ENCODE measurements at regions of chr18 and their contacts with region 1.

Region 1: DNA sequence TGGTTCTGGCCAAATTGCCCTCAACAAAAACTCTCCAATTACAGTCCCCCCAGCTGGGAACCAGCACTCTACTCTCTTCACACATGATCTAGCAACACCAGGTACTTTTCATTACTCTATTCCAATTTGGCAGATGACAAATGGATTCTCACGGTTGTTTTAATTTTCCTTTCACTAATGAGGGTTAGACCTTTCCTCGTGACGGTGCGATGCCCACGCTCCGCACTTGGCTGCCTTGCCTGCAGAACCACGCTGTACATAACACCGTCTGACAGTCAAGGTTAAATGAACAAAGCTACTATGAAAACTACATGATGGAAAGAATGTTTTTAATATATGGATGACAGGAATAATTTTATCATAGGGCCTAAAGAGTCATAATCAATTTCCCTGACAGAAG is 141.5 kb downstream of the FBXO15 start:
- DNase-seq: no peak
- ATAC-seq: no peak
- H3K4me3 Mint-ChIP-seq: no peak overlapping the region
- H3K27ac Mint-ChIP-seq: no peak overlapping the region
- H3K4me1 Mint-ChIP-seq: no peaks in the 10 kb centered on the region
- H3K27me3 Mint-ChIP-seq: no peaks in the 10 kb centered on the region

Region 2: GRCh38 chr18:74063023-74063422 is 56.9 kb after region 1 on chr18:
- CTCF ChIA-PET with region 1: no interaction called
- POLR2A ChIA-PET with region 1: no interaction called
- intact Hi-C with region 1: loop called in 1 of 2 experiments (anchors 10 kb)
- DNase-seq: peak; percentile 65
- ATAC-seq: peak; percentile 55
- H3K4me3 Mint-ChIP-seq: no peak overlapping the region
- H3K27ac Mint-ChIP-seq: peak overlapping the region; percentile 75
- H3K4me1 Mint-ChIP-seq: peaks cover 34% of the 10 kb centered on the region
- H3K27me3 Mint-ChIP-seq: no peaks in the 10 kb centered on the region

Region 3: DNA sequence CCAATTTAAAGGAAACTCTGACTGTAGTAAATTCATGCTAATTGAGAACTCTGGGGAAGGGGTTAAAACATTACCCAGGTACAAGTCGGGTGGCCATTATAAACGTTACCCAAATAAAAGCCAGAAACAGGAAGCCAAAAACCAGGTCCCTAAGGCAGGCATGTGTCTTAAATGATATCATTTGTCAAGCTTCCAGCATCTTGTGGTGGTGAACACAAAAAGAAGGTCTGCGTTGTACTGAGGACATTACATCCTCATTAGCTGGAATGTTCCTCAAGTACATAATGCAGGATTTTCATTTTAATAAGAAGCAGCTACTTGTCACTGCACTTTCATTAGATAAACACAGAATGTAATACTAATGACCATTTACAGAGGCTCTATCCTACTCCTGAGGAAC is 1191.9 kb after region 1 on chr18:
- CTCF ChIA-PET with region 1: no interaction called
- POLR2A ChIA-PET with region 1: no interaction called
- intact Hi-C with region 1: no loop called
- DNase-seq: no peak
- ATAC-seq: no peak
- H3K4me3 Mint-ChIP-seq: no peak overlapping the region
- H3K27ac Mint-ChIP-seq: no peak overlapping the region
- H3K4me1 Mint-ChIP-seq: peaks cover 15% of the 10 kb centered on the region
- H3K27me3 Mint-ChIP-seq: no peaks in the 10 kb centered on the region